Activated naive CD4-positive, alpha-beta T cell treated with anti-CD3 and anti-CD28 coated beads, Interleukin-2, amount 10 ng/mL, durations not matched to agents 7 days and 5 days (primary cell): ENCODE measurements at regions of chr2 and their contacts with region 1.

Region 1: DNA sequence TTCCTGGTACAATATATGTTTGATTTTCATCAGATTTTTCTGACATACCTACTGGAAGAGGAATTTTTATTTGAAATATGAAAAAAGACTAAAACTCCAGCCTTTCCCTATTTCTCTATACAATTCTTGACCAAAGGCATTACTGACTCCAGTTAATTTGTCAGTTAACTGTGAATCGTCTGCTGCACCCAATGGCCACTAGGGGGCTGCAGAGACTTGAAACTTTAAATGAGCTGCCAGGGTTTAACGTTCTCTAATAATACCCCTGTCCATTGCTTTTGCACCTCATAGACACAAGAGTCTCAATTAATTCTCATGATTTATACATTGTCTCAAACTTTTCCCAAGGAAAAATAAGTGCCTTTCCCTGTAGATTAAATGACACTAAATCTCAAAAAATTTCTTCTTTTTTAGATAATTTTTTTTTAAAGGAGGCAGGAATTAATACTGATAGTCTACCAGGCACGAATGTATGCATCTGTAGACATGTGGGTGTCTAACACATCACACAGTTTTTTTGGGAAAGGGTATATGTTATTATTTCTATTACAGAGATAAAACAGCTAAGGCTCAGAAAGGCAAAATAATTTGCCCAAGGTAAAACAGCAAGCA is 1.8 kb upstream of the ALK start:
- DNase-seq: peak; percentile 69
- H3K4me3 Mint-ChIP-seq: no peak overlapping the region
- H3K27ac Mint-ChIP-seq: no peak overlapping the region
- H3K4me1 Mint-ChIP-seq: peaks cover 10% of the 10 kb centered on the region
- H3K27me3 Mint-ChIP-seq: peaks cover 51% of the 10 kb centered on the region

Region 2: GRCh38 chr2:30026087-30027055 is 103.2 kb after region 1 on chr2:
- CTCF ChIA-PET with region 1: interaction called, 85 read pairs
- DNase-seq: peak; percentile 24
- H3K4me3 Mint-ChIP-seq: no peak overlapping the region
- H3K27ac Mint-ChIP-seq: no peak overlapping the region
- H3K4me1 Mint-ChIP-seq: no peaks in the 10 kb centered on the region
- H3K27me3 Mint-ChIP-seq: peaks cover 14% of the 10 kb centered on the region

Region 3: DNA sequence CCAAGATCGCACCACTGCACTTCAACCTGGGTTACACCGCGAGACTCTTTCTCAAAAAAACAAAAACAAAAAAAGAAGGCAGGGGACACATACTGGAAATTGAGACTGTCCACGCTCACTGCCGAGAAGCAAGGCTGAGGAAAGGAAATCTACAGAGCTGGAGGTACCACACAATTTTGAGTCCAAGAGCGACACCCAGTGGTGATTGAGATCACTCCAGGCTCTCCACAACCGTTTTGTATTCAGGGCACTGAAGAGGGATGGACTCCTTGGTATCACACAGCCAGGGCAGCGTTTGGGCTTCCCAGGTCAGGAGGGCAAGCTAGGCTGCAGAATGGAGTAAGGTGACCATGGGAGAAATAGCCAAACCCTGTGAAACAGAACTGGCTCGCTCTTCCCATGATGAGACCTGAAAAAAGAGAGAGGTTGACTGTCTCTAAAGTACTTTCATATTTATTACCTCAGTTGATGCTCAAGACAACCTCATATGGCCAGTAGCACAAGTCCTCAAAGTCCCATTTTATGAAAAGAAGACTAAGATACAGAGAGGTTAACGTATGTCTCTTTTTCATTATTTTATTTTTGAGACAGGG is 149.1 kb after region 1 on chr2:
- CTCF ChIA-PET with region 1: interaction called, 28 read pairs
- DNase-seq: peak; percentile 78
- H3K4me3 Mint-ChIP-seq: no peak overlapping the region
- H3K27ac Mint-ChIP-seq: no peak overlapping the region
- H3K4me1 Mint-ChIP-seq: no peaks in the 10 kb centered on the region
- H3K27me3 Mint-ChIP-seq: peaks cover 20% of the 10 kb centered on the region